ENCODE measurements at regions of chr6 and their contacts with region 1.

Region 1: DNA sequence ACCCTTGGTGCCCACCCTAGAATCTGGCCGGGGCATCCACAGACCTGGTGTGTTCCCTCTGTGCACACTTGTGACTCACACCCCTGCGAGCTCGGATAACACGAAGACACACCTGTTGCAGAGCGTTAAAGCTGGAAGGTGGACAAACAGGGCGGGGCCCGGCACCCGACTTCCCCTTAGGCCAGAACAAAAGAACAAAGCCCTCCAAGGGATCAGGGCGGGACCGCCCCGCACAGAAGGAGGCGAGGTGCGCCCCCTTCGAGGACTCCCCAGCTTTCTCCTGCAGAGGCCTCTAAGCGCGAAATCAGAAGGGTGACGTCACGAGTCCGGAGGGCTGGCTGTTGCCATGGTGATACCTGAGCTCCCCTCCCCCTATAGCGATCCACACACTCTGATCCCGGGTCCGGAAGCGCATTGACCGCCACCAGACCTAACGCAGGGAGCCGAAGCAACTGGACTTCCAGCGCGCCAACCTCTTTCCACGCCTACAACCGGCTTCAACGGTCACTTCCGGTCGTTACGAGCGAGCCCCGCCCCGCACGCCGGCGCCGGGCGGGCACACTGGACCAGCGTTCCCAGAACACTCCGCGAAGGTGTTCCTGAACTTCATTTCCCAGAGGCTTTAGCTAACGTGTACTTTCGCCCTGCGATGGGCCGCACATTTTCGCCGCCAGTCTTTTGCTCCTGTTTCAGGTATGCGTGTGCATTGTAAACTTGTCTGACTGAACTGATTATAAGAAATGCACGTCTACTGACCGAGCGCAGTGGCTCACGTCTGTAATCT is at the start of gene ZNF184:
- DNase-seq: peak; percentile 94 to 98
- H3K4me3 ChIP-seq: peak within 1 kb of the TSS; percentile 91
- H3K27ac ChIP-seq: peak within 1 kb of the TSS; percentile 79
- H3K4me1 ChIP-seq: peaks cover 12% of the 10 kb centered on the region; the same call in 1 of the 2 replicates
- H3K27me3 ChIP-seq: no peaks in the 10 kb centered on the region
- CTCF ChIP-seq: peak; percentile 19; the same call in 1 of the 2 replicates
- total RNA-seq, gene ZNF184: 7.0 and 8.8 TPM in 2 replicates

Region 2: DNA sequence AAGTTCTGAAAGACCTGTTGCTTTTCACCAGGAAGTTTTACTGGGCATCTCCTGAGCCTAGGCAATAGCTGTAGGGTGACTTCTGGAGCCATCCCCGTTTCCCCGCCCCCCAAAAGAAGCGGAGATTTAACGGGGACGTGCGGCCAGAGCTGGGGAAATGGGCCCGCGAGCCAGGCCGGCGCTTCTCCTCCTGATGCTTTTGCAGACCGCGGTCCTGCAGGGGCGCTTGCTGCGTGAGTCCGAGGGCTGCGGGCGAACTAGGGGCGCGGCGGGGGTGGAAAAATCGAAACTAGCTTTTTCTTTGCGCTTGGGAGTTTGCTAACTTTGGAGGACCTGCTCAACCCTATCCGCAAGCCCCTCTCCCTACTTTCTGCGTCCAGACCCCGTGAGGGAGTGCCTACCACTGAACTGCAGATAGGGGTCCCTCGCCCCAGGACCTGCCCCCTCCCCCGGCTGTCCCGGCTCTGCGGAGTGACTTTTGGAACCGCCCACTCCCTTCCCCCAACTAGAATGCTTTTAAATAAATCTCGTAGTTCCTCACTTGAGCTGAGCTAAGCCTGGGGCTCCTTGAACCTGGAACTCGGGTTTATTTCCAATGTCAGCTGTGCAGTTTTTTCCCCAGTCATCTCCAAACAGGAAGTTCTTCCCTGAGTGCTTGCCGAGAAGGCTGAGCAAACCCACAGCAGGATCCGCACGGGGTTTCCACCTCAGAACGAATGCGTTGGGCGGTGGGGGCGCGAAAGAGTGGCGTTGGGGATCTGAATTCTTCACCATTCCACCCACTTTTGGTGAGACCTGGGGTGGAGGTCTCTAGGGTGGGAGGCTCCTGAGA is 1385.3 kb before region 1 on chr6 and contains the start of gene HFE:
- CTCF ChIA-PET with region 1: interaction called, 19 read pairs
- POLR2A ChIA-PET with region 1: no interaction called
- intact Hi-C with region 1: no loop called
- DNase-seq: peak; percentile 56
- H3K4me3 ChIP-seq: peak within 1 kb of the TSS; percentile 78
- H3K27ac ChIP-seq: peak within 1 kb of the TSS; percentile 72
- H3K4me1 ChIP-seq: peaks cover 27% of the 10 kb centered on the region
- H3K27me3 ChIP-seq: no peaks in the 10 kb centered on the region
- CTCF ChIP-seq: no peak
- total RNA-seq, gene HFE: 33.3 and 46.0 TPM in 2 replicates

Region 3: GRCh38 chr6:27213544-27214125 is 259.2 kb before region 1 on chr6:
- CTCF ChIA-PET with region 1: no interaction called
- POLR2A ChIA-PET with region 1: no interaction called
- intact Hi-C with region 1: no loop called
- DNase-seq: peak; percentile 61
- H3K4me3 ChIP-seq: peak overlapping the region; percentile 73
- H3K27ac ChIP-seq: no peak overlapping the region
- H3K4me1 ChIP-seq: 0 out of 2 replicates have a peak, but pooled peaks cover 4% of the 10 kb centered on the region
- H3K27me3 ChIP-seq: no peaks in the 10 kb centered on the region
- CTCF ChIP-seq: no peak

Region 4: DNA sequence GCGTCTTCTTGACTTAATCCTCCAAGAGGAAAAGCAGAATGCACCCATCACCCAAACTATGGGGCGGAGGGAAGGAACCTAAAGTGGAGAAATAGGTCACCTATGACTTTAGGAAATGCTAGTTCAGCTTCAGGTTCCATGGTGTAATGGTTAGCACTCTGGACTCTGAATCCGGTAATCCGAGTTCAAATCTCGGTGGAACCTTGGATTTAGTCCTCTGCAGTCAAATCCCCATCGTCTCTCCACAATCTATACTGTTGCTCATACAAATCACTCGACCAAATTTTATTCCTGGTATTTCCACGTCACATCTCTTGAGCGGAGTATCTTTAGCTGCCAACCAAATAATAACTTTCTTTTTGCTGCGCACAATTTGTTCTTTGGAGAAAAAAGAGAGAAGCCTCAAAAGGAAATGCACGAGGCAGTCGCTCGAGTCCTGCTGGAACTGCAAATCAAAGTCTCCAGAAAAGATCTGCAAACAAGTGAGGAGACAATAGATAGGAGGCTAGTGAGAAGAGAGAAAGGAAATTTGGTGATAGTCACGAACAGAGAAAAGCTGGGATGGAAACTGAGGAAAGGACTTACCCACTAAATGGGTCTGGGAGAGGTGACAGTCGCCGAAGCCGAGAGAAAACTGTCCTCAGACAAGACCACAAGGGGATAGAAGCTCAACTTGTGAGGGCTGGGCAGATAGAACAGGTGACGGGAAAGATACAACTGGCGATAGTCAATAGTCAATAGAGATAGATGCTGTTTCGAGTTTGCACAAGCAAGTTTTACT is 177.3 kb before region 1 on chr6:
- CTCF ChIA-PET with region 1: no interaction called
- POLR2A ChIA-PET with region 1: no interaction called
- intact Hi-C with region 1: loop called (anchors 10 kb)
- DNase-seq: peak; percentile 49 to 73
- H3K4me3 ChIP-seq: peak overlapping the region; percentile 84
- H3K27ac ChIP-seq: no peak overlapping the region
- H3K4me1 ChIP-seq: peaks cover 27% of the 10 kb centered on the region
- H3K27me3 ChIP-seq: no peaks in the 10 kb centered on the region
- CTCF ChIP-seq: no peak

Region 5: GRCh38 chr6:27332692-27333641 is 139.8 kb before region 1 on chr6:
- CTCF ChIA-PET with region 1: no interaction called
- POLR2A ChIA-PET with region 1: no interaction called
- intact Hi-C with region 1: loop called (anchors 2 kb)
- DNase-seq: peak; percentile 62 to 72
- H3K4me3 ChIP-seq: peak overlapping the region; percentile 82
- H3K27ac ChIP-seq: 0 out of 2 replicates have a peak overlapping the region, but pooled peaks have one; percentile 21
- H3K4me1 ChIP-seq: peaks cover 10% of the 10 kb centered on the region; the same call in 1 of the 2 replicates
- H3K27me3 ChIP-seq: no peaks in the 10 kb centered on the region
- CTCF ChIP-seq: no peak

Region 6: DNA sequence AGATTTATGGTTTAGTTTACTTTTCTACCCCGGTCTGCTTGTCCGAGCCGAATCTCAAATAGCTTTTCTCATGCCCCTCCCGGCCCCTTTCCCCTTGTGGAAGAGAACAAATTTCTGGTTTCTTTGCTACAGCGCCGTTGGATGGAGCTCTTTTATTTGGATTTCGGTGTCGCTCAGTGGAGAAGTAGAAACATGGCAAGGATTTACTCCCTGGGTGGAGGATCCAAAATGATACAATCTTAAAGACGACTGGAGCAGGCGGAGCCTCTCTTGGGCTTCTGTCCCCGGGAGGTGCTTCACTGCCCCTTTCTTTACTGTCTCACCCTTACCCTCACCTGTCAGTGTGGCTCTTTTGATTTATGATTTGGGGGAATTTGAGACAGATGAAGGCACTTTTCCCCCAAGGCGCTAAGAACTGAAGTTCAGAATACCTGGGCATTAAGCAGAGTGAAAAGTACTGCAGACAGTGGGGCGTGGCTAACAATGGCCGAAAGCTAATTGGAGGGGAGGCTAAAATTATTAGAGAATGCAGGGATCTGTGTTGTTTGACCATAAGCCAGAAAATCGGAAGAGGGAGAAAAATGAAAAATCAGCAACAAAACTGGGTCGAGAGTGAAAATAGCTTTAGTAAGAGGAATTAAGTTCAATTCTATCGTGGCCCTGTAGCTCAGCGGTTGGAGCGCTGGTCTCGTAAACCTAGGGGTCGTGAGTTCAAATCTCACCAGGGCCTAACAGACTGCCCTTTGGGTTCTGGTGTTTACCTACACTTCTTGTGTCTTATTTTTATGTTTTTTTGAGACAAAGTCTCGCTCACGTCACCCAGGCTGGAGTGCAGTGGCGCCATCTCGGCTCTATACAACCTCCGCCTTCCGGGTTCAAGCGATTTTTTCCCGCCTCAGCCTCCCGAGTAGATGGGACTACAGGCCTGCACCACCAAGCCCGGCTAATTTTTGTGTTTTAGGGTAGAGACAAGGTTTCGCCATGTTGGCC is 145.2 kb after region 1 on chr6:
- CTCF ChIA-PET with region 1: no interaction called
- POLR2A ChIA-PET with region 1: interaction called, 17 read pairs
- intact Hi-C with region 1: no loop called
- DNase-seq: peak; percentile 50 to 60
- H3K4me3 ChIP-seq: peak overlapping the region; percentile 78
- H3K27ac ChIP-seq: peak overlapping the region; percentile 30
- H3K4me1 ChIP-seq: peaks cover 8% of the 10 kb centered on the region
- H3K27me3 ChIP-seq: no peaks in the 10 kb centered on the region
- CTCF ChIP-seq: 0 out of 2 replicates have a peak, but pooled peaks have one; percentile 28

Measured in PC-9 (cell line).